Heart left ventricle (tissue), 16 donors: ENCODE measurements at regions of chr2 and their contacts with region 1.

Region 1: GRCh38 chr2:68709421-68709911 is 25.1 kb upstream of the ARHGAP25 start:
- DNase-seq: peak in 1 of 5 donors; percentile 15
- ATAC-seq: peak in 3 of 4 donors; percentile 69 to 77 (median 74)
- H3K4me3 ChIP-seq: no peak overlapping the region
- H3K27ac ChIP-seq: no peak overlapping the region
- H3K4me1 ChIP-seq: peaks cover 0 to 9% (median 0%) of the 10 kb centered on the region in 12 donors
- H3K27me3 ChIP-seq: peaks cover 0 to 2% (median 0%) of the 10 kb centered on the region in 9 donors
- CTCF ChIP-seq: peak; percentile 62 to 80 (median 70)
- POLR2A ChIP-seq: no peak

Region 2: DNA sequence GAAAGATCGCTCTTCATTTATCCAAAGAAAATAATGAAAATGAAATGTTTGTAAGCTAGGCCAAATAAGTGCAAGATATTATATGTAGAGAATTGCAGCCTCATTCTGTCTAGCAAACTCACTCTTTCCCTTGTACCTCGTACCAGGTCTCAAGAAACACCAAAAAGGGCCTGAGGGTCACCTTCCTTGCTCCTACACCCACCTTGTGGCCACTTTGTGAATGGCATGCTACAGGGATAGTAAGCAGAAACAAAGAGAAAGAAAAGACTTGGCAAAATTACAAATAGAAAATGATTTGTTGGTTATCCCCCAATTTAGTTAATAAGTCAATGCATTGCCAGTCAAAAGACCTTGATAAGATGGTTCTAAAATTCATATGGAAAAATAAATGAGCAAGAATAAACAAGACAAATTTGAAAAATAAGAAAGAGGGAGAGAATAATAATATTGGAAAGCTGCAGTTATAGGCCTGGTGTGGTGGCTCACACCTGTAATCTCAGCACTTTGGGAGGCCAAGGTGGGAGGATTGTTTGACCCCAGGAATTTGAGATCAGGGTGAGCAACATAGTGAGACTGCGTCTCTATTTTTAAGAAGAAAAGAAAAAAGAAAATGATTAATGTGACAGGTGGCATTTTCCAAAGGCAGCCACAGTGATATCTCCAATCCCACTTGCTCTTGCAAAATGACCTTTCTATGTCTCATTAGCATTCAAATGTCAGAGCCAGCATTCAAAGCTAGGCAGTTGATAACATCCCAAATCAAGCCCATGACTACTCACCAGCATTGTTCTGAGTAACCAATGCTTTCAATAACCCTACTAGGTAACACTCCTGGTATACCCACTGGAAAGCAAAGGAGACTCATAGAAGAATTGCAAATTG is 200.6 kb after region 1 on chr2:
- intact Hi-C with region 1: loop called in 7 of 10 experiments (anchors 2 to 5 kb)
- DNase-seq: peak in 4 of 5 donors; percentile 46 to 68 (median 63)
- ATAC-seq: peak in 3 of 4 donors; percentile 66 to 76 (median 74)
- H3K4me3 ChIP-seq: no peak overlapping the region
- H3K27ac ChIP-seq: no peak overlapping the region
- H3K4me1 ChIP-seq: peaks cover 0 to 54% (median 8%) of the 10 kb centered on the region in 12 donors
- H3K27me3 ChIP-seq: no peaks in the 10 kb centered on the region
- CTCF ChIP-seq: peak; percentile 86 to 95 (median 93)
- POLR2A ChIP-seq: no peak

Region 3: DNA sequence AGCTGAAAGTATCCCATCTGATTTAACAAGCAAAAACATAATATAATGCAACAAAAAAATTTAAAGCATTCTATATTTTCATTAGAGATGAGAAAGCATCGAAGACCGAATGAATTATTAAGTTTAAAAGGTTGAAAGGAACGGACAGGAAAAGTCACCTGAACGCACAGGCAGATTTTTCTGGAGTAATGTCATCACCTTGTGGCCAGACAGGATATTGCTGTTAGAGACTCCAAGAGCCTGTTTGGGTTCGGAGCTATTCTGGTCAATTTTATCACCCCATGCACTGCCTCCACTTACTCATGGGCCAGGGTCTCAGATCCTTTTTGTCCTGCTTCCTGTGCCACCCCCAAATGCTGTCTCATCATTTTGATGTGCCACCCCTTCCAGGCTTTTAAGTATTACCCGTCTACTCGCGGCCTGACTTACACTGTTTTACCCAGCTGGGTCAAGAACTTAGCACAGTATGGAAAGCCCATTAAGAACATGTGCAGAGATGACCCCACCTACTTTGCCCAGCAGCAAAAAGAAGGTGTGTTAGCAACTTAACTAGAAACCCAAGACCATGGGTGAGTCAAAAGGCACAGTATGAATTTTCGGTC is 215.9 kb after region 1 on chr2:
- intact Hi-C with region 1: loop called in 7 of 10 experiments (anchors 1 to 5 kb)
- DNase-seq: no peak
- ATAC-seq: peak in 3 of 4 donors; percentile 57 to 65 (median 62)
- H3K4me3 ChIP-seq: no peak overlapping the region
- H3K27ac ChIP-seq: no peak overlapping the region
- H3K4me1 ChIP-seq: no peaks in the 10 kb centered on the region
- H3K27me3 ChIP-seq: peaks cover 0 to 13% (median 0%) of the 10 kb centered on the region in 9 donors
- CTCF ChIP-seq: peak; percentile 74 to 92 (median 82)
- POLR2A ChIP-seq: no peak